ENCODE measurements at regions of chr2 and their contacts with region 1.

Region 1: DNA sequence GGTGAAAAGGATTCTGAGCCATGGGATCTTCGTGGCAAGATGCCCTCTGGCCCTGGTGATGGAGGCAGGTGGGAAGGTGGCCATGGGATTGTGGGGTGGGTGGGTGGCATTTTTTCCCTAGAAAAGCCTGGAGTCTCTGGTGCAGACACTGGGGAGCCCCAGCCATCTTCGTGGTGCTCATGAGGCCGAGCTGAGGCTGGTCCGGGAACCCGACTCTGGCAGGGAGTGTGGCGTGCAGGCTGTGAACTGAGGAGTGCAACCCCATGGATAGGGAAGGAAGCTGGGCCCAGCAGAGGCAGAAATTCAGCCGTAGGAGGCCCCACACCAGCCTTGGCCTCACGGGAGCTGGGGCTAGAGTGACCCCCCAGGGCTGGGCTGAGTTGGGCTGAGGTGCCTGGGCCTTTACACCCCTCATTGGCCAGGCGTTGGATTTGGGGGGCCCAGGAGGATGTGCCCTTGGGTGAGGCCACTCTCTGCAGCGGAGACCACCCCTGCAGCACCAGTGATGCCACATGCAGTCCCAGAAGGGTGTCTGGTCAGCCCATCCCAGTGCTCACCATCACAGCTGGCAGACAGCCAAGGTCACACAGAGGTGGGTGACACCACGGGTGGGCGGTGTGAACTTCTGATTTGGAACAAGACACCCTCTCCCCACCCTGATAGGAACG is 115.6 kb upstream of the HDAC4 start:
- DNase-seq: no peak

Region 2: GRCh38 chr2:239538357-239539052 is 22.1 kb after region 1 on chr2:
- intact Hi-C with region 1: loop called in 1 of 2 experiments (anchors 1 kb)
- DNase-seq: peak; percentile 64

Region 3: DNA sequence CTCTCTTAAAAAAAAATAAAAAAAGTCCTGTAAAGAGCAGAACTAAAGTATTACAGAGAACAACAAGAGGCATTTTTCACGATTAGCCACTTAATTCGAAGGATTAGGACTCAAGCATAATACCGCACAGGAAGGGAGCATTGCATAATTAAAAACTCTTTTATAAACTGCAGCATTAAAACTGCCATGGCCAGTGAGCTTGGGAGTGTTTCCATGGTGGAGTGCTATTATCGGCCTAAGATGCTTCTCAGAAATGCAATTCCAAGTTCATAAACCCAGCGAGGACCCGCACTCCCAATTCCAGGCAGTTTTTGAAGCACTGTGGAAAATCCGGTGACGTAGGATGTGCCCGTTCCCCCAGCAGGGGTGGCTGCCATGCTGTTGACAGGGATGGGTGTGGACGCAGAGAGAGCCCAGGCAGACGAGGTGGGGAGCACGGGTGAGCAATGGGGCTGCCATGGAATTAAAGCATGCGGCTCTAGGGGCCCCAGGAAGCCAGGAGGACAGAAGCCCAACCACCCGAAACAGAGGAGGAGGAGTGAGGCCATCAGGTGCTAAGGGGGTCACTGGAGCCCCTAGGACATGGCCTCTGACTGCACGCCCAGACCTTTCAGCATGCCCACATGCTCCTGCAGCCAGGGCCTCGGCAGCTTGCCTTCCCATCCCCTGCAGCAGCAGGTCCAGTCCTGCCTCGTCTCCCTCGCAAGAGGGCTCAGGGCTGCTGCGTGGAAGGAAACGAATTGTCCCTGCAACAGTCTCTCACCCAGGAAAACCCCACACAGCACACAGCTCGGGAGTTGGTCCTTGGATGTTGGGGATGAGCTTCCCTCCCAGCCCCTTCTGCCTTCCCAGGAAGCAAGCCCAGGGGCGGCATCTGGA is 275.3 kb after region 1 on chr2:
- intact Hi-C with region 1: no loop called
- DNase-seq: no peak

Measured in posterior vena cava (tissue), 2 donors.